Heart left ventricle (tissue), 16 donors: ENCODE measurements at regions of chr3 and their contacts with region 1.

Region 1: DNA sequence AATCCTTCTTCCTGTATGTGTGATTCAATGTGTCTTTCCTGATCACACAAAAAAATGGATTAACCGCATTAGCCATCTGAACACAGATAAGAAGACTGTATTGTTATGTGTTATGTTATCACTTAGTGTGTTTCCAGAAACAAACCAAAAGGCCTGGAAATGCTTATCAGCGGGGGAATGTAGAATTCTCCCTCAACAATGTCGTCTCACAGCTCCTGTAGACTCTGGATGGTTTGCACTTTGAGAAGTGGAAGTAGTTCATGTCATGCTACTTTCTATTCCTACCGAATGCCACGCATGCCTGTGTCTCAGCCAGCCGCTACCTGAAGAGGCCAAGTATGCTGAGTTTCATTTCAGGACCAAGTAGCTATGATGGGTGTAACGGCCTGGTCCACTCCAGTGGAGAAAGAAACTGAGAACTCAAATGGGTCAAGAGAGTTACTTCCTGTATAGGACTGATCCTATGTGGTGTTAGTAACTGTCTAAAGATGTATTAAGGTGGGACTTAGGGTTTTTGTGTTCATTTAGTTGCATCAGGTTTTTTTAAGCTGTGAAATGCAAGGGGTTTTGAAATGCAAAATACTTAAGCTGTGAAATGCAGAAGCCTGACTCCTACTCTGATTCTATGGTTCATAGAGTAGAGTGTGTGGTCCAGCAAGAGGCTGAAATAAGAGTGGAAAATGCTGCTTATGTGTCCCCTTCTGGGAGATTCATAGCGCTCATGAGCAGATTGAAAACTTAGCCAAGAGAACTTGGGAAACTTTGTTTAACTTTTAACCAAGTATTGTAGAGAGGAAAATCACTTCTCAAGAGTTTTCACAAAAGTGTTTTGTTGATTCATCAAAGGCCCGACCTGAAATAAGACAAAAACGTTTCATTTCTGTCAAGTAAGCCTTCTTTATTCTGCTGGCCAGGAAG is 118.5 kb upstream of the LMOD3 start:
- DNase-seq: no peak
- ATAC-seq: no peak
- H3K4me3 ChIP-seq: no peak overlapping the region
- H3K27ac ChIP-seq: peak overlapping the region in 1 of 12 donors; percentile 15
- H3K4me1 ChIP-seq: peaks cover 0 to 39% (median 10%) of the 10 kb centered on the region in 12 donors
- H3K27me3 ChIP-seq: no peaks in the 10 kb centered on the region
- CTCF ChIP-seq: no peak
- POLR2A ChIP-seq: no peak

Region 2: GRCh38 chr3:68893600-68894239 is 347.2 kb before region 1 on chr3:
- intact Hi-C with region 1: no loop called
- DNase-seq: no peak
- ATAC-seq: no peak
- H3K4me3 ChIP-seq: no peak overlapping the region
- H3K27ac ChIP-seq: no peak overlapping the region
- H3K4me1 ChIP-seq: no peaks in the 10 kb centered on the region
- H3K27me3 ChIP-seq: peaks cover 0 to 17% (median 0%) of the 10 kb centered on the region in 9 donors
- CTCF ChIP-seq: peak; percentile 37 to 66 (median 53)
- POLR2A ChIP-seq: no peak

Region 3: DNA sequence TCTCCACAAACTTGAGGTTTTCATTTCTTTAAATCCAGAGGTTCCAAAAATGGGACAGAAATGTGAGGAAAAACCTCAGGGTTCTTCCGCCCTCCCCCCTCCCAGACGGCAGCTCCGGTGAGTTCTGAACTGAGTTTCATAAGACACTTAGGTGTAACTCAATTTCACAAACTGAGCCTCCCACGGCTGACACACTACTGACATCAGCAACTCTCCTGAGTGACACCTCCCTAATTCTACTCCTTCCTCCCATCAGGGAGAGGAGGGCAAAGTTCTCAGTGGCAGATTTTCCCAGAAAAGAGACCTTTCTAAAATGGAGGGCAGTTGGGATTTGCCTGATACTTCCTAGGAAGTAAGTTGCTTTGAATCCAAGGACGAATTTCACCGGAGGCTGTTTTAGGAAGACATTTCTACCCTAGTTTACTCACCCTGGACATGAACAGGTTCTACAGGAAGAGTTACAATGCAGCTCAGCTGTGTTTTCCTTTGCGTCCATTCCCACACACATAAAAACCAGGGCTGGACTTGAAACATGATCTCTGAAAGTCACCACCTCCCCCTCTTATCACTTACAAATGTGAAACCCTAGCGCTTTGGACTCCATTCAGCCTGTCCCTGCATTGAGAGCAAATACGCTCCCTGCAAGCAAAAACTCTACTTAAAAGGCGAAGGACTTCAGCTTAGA is 40.4 kb before region 1 on chr3:
- intact Hi-C with region 1: loop called in 1 of 10 experiments (anchors 5 kb)
- DNase-seq: peak in 2 of 5 donors; percentile 18 to 39
- ATAC-seq: peak; percentile 65 to 79 (median 78)
- H3K4me3 ChIP-seq: peak overlapping the region in 10 of 12 donors; percentile 5 to 51 (median 40)
- H3K27ac ChIP-seq: peak overlapping the region in 10 of 12 donors; percentile 8 to 67 (median 52)
- H3K4me1 ChIP-seq: peaks cover 0 to 32% (median 11%) of the 10 kb centered on the region in 12 donors
- H3K27me3 ChIP-seq: no peaks in the 10 kb centered on the region
- CTCF ChIP-seq: no peak
- POLR2A ChIP-seq: no peak

Region 4: GRCh38 chr3:69294014-69294775 is 53.3 kb after region 1 on chr3:
- intact Hi-C with region 1: loop called in 2 of 10 experiments (anchors 5 to 10 kb)
- DNase-seq: no peak
- ATAC-seq: peak in 2 of 4 donors; percentile 5 to 17
- H3K4me3 ChIP-seq: no peak overlapping the region
- H3K27ac ChIP-seq: peak overlapping the region in 3 of 12 donors; percentile 39 to 59 (median 49)
- H3K4me1 ChIP-seq: peaks cover 0 to 39% (median 12%) of the 10 kb centered on the region in 12 donors
- H3K27me3 ChIP-seq: no peaks in the 10 kb centered on the region
- CTCF ChIP-seq: no peak
- POLR2A ChIP-seq: no peak